ENCODE measurements at regions of chr12 and their contacts with region 1.

Region 1: GRCh38 chr12:58346032-58346632 is 404.8 kb downstream of the ATP23 start:
- DNase-seq: no peak
- H3K4me3 ChIP-seq: no peak overlapping the region
- H3K27ac ChIP-seq: no peak overlapping the region
- H3K4me1 ChIP-seq: no peaks in the 10 kb centered on the region
- H3K27me3 ChIP-seq: no peaks in the 10 kb centered on the region
- CTCF ChIP-seq: peak; percentile 38 to 77 (median 61)
- EP300 ChIP-seq: no peak
- POLR2A ChIP-seq: no peak

Region 2: GRCh38 chr12:58186914-58187313 is 159.2 kb before region 1 on chr12:
- intact Hi-C with region 1: no loop called
- DNase-seq: no peak
- H3K4me3 ChIP-seq: no peak overlapping the region
- H3K27ac ChIP-seq: no peak overlapping the region
- H3K4me1 ChIP-seq: no peaks in the 10 kb centered on the region
- H3K27me3 ChIP-seq: no peaks in the 10 kb centered on the region
- CTCF ChIP-seq: no peak
- EP300 ChIP-seq: no peak
- POLR2A ChIP-seq: no peak

Region 3: GRCh38 chr12:58253663-58254062 is 92.5 kb before region 1 on chr12:
- intact Hi-C with region 1: no loop called
- DNase-seq: no peak
- H3K4me3 ChIP-seq: no peak overlapping the region
- H3K27ac ChIP-seq: no peak overlapping the region
- H3K4me1 ChIP-seq: no peaks in the 10 kb centered on the region
- H3K27me3 ChIP-seq: no peaks in the 10 kb centered on the region
- CTCF ChIP-seq: no peak
- EP300 ChIP-seq: no peak
- POLR2A ChIP-seq: no peak

Region 4: GRCh38 chr12:58529897-58530741 is 184.0 kb after region 1 on chr12:
- intact Hi-C with region 1: loop called (anchors 10 kb)
- DNase-seq: no peak
- H3K4me3 ChIP-seq: no peak overlapping the region
- H3K27ac ChIP-seq: peak overlapping the region in 3 of 4 donors; percentile 44 to 69 (median 56)
- H3K4me1 ChIP-seq: peaks cover 0 to 37% (median 21%) of the 10 kb centered on the region in 4 donors
- H3K27me3 ChIP-seq: no peaks in the 10 kb centered on the region
- CTCF ChIP-seq: no peak
- EP300 ChIP-seq: peak in 2 of 4 donors; percentile 20 to 71
- POLR2A ChIP-seq: no peak